ENCODE measurements at regions of chr19 and their contacts with region 1.

Region 1: DNA sequence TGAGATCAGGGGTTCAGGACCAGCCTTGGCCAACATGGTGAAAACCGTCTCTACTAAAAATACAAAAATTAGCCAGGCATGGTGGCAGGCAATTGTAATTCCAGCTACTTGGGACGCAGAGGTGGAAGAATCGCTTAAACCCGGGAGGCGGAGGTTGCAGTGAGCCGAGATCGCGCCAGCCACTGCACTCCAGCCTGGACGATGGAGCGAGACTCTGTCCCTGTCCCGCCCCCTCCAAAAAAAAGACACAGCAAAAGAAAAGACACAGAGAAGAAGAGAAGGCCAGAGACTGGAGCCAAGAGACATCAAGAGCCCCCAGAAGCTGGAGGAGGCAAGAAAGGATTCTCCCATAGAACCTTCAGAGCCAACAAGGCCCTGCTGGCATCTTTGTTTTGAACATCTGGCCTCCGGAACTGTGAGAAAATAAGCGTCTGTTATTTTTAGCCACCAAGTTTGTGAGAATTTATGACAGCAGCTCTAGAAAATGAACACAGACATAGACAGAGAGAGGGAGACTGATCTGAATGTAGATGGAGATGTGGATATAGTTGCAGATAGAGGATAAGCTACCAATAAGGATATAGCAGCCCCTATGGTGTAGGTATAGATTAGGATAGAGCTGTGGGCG is 25.7 kb upstream of the PNMA8B start:
- DNase-seq: no peak
- H3K4me3 Mint-ChIP-seq: peak overlapping the region; percentile 8
- H3K27ac Mint-ChIP-seq: peak overlapping the region; percentile 100
- H3K4me1 Mint-ChIP-seq: peaks cover 82% of the 10 kb centered on the region
- H3K27me3 Mint-ChIP-seq: no peaks in the 10 kb centered on the region

Region 2: GRCh38 chr19:46466536-46467196 is 54.7 kb before region 1 on chr19:
- CTCF ChIA-PET with region 1: no interaction called
- POLR2A ChIA-PET with region 1: no interaction called
- DNase-seq: no peak
- H3K4me3 Mint-ChIP-seq: no peak overlapping the region
- H3K27ac Mint-ChIP-seq: no peak overlapping the region
- H3K4me1 Mint-ChIP-seq: no peaks in the 10 kb centered on the region
- H3K27me3 Mint-ChIP-seq: peaks cover 21% of the 10 kb centered on the region

Region 3: DNA sequence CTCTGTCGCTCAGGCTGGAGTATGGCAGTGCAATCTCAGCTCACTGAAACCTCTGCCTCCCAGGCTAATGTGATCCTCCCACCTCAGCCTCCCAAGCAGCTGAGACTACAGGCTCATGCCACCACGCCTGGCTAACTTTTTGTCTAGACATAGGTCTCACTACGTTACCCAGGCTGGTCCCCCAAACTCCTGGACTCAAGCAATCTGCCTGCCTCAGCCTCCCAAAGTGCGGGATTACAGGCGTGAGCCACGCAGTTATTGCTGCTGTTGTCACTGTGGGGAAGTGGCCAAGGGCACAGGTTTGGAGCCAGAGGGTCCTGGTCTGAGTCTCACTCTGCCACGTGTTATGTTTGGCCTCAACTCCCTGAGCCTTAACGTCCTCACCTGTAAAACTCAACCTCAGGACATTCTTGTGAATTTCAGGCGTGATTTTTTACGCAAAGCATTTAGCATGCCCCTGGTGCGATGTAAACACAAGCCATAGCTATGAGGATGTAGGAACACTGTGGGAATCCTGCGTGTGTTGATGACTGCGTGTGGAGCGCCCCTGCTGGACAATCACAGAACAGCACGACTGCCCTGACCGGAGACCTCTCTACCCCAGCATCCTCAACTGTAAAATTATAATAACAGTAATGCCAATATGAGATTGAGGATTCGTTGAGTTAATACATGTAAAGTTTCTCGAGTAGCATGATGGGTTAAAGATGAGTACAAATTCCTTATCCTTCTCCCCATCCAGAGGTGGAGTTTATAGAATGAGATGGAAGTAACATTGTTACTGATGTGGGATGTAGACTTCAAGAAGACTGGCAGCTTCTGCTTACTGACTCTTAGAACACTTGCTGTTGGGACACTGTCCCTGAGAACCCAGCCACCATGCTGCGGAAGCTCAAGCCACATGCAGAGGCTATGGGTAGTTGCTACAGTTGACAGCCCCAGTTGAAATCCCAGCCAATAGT is 16.1 kb after region 1 on chr19:
- CTCF ChIA-PET with region 1: interaction called, 17 read pairs
- POLR2A ChIA-PET with region 1: no interaction called
- DNase-seq: peak; percentile 60
- H3K4me3 Mint-ChIP-seq: no peak overlapping the region
- H3K27ac Mint-ChIP-seq: no peak overlapping the region
- H3K4me1 Mint-ChIP-seq: peaks cover 7% of the 10 kb centered on the region
- H3K27me3 Mint-ChIP-seq: peaks cover 4% of the 10 kb centered on the region